ENCODE measurements at regions of chr15 and their contacts with region 1.

Region 1: GRCh38 chr15:63504247-63504978 is at the start of gene USP3:
- DNase-seq: peak; percentile 88 to 95 (median 94)
- ATAC-seq: peak; percentile 86
- H3K4me3 ChIP-seq: peak within 1 kb of the TSS; percentile 95
- H3K4me3 Mint-ChIP-seq: peak within 1 kb of the TSS; percentile 93 to 99 (median 98)
- H3K27ac ChIP-seq: peak within 1 kb of the TSS; percentile 97
- H3K27ac Mint-ChIP-seq: peak within 1 kb of the TSS; percentile 94 to 99 (median 97)
- H3K4me1 ChIP-seq: peaks cover 65 to 70% of the 10 kb centered on the region in 2 donors
- H3K4me1 Mint-ChIP-seq: peaks cover 30 to 75% (median 72%) of the 10 kb centered on the region in 7 donors
- H3K27me3 ChIP-seq: no peaks in the 10 kb centered on the region
- H3K27me3 Mint-ChIP-seq: no peaks in the 10 kb centered on the region
- total RNA-seq, gene USP3: 64.2 to 288 (median 155) TPM

Region 2: DNA sequence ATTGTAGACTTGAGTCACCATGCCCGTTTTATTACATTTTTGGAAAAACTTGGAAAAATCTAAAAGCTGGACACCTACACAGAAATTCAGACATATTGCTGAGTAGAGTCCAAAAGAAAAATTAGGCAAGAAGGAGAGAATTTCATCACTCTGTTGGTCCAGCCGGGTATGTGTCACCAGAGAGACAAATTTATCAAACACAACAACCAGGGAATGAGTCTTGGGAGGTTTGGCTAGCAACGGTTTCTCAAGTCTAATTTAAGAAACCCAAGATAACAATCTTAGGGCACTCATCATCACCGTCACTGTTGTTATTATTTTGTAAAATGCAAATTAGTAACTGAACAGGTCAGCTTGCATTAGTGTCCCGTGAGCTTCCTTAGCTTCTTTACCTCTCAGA is 1141.8 kb before region 1 on chr15:
- CTCF ChIA-PET with region 1: no interaction called
- POLR2A ChIA-PET with region 1: no interaction called
- intact Hi-C with region 1: no loop called
- DNase-seq: no peak
- ATAC-seq: no peak
- H3K4me3 ChIP-seq: no peak overlapping the region
- H3K4me3 Mint-ChIP-seq: no peak overlapping the region
- H3K27ac ChIP-seq: no peak overlapping the region
- H3K27ac Mint-ChIP-seq: no peak overlapping the region
- H3K4me1 ChIP-seq: no peaks in the 10 kb centered on the region
- H3K4me1 Mint-ChIP-seq: no peaks in the 10 kb centered on the region
- H3K27me3 ChIP-seq: peaks cover 0 to 3% of the 10 kb centered on the region in 2 donors
- H3K27me3 Mint-ChIP-seq: peaks cover 21 to 50% (median 28%) of the 10 kb centered on the region in 5 donors

Region 3: DNA sequence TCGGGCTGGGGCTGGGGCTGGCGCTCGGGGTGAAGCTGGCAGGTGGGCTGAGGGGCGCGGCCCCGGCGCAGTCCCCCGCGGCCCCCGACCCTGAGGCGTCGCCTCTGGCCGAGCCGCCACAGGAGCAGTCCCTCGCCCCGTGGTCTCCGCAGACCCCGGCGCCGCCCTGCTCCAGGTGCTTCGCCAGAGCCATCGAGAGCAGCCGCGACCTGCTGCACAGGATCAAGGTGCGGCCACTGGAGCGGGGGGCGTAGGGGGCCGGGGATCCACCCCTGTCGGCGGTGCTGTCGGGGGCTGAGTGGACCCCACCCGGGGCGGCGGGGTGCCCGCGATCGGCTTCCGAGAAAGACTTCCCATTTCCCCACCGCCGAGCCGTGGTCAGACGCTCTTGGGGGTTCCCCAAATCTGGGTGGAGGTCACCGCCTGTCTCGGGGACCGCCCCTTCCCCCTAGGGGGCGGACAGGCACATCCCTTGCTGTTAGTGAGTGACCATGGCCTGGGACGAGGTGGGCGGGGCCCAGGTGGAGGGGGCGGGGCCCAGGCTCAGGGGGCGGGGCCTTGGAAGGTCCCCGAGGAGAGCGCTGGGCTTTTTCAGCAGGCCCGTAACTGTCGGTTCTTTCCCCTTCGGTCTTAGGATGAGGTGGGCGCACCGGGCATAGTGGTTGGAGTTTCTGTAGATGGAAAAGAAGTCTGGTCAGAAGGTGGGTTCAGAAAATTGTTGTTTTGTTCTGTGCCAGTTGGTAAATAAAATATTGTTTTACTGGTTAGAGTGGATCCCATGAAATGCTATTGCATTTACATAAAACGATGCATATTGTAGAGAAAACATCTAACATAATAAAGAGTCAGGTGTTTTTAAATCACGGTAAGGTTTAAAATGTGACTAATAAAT is 382.2 kb before region 1 on chr15:
- CTCF ChIA-PET with region 1: no interaction called
- POLR2A ChIA-PET with region 1: no interaction called
- intact Hi-C with region 1: loop called in 1 of 2 experiments (anchors 5 kb)
- DNase-seq: peak; percentile 38 to 91 (median 57)
- ATAC-seq: peak; percentile 95
- H3K4me3 ChIP-seq: peak overlapping the region; percentile 75
- H3K4me3 Mint-ChIP-seq: peak overlapping the region; percentile 80 to 95 (median 92)
- H3K27ac ChIP-seq: peak overlapping the region; percentile 80
- H3K27ac Mint-ChIP-seq: peak overlapping the region; percentile 54 to 95 (median 79)
- H3K4me1 ChIP-seq: peaks cover 4 to 8% of the 10 kb centered on the region in 2 donors
- H3K4me1 Mint-ChIP-seq: peaks cover 9 to 29% (median 18%) of the 10 kb centered on the region in 7 donors
- H3K27me3 ChIP-seq: no peaks in the 10 kb centered on the region
- H3K27me3 Mint-ChIP-seq: no peaks in the 10 kb centered on the region

Region 4: DNA sequence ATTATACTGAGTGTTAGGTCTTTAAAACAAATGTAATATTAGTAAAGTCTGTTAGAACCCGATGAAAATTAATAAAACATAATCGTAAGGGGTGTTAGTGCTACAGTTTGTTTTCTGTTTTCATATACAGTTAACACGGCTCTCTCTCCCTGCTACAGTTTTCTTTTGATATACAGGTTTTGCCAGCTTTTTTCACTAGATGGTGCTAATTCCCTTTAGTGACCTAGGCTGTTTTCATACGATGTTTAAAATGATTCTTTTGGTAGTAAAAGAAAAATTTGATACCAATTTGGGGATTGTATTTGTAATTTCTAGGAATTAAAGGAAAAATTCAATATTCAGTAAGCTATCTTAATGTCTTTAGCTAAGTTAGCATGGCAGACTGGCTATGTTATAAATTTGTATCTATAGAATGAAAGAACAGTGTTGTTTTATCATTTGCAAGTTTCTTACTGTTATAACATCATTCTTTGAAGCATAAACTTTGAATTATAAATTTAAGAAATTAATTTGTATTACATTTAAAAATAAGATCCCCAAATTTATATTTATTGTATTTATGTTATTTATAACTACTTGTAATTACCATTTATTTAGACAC is 215.5 kb before region 1 on chr15:
- CTCF ChIA-PET with region 1: no interaction called
- POLR2A ChIA-PET with region 1: no interaction called
- intact Hi-C with region 1: no loop called
- DNase-seq: peak in 7 of 9 donors; percentile 30 to 68 (median 52)
- ATAC-seq: peak; percentile 79
- H3K4me3 ChIP-seq: no peak overlapping the region
- H3K4me3 Mint-ChIP-seq: peak overlapping the region in 1 of 10 donors; percentile 6
- H3K27ac ChIP-seq: no peak overlapping the region
- H3K27ac Mint-ChIP-seq: peak overlapping the region in 4 of 9 donors; percentile 12 to 64 (median 59)
- H3K4me1 ChIP-seq: no peaks in the 10 kb centered on the region
- H3K4me1 Mint-ChIP-seq: peaks cover 5 to 10% (median 7%) of the 10 kb centered on the region in 7 donors
- H3K27me3 ChIP-seq: no peaks in the 10 kb centered on the region
- H3K27me3 Mint-ChIP-seq: no peaks in the 10 kb centered on the region

Region 5: DNA sequence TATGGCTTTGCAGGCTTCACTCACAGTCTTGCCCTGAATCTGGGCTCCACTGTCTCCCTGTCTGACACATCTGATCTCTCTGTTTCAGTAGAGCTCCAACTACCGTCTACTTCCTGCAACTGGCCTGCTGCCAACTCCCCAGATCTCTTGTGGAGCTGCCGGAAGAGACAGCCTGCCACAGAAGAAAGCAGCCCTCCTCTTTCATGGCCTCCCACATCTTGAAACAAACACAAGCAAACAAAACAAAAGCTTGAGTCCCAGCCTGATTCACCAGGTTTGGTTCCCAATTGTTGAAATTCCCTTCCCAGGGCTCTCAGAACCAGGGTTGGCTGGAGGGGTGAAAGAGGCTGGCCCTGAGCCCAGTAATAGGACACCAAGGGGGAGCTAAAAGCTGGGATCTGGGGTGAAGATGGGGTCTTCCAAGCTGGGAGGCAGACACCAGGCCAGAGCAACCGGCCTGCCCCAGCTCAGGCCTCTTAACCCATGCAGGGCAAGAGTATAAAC is 67.5 kb before region 1 on chr15:
- CTCF ChIA-PET with region 1: no interaction called
- POLR2A ChIA-PET with region 1: interaction called, 10 read pairs
- intact Hi-C with region 1: no loop called
- DNase-seq: peak; percentile 58 to 91 (median 84)
- ATAC-seq: peak; percentile 89
- H3K4me3 ChIP-seq: peak overlapping the region; percentile 33
- H3K4me3 Mint-ChIP-seq: peak overlapping the region; percentile 9 to 86 (median 69)
- H3K27ac ChIP-seq: peak overlapping the region; percentile 62
- H3K27ac Mint-ChIP-seq: peak overlapping the region; percentile 83 to 97 (median 92)
- H3K4me1 ChIP-seq: peaks cover 4 to 38% of the 10 kb centered on the region in 2 donors
- H3K4me1 Mint-ChIP-seq: peaks cover 16 to 74% (median 52%) of the 10 kb centered on the region in 7 donors
- H3K27me3 ChIP-seq: no peaks in the 10 kb centered on the region
- H3K27me3 Mint-ChIP-seq: no peaks in the 10 kb centered on the region

Region 6: DNA sequence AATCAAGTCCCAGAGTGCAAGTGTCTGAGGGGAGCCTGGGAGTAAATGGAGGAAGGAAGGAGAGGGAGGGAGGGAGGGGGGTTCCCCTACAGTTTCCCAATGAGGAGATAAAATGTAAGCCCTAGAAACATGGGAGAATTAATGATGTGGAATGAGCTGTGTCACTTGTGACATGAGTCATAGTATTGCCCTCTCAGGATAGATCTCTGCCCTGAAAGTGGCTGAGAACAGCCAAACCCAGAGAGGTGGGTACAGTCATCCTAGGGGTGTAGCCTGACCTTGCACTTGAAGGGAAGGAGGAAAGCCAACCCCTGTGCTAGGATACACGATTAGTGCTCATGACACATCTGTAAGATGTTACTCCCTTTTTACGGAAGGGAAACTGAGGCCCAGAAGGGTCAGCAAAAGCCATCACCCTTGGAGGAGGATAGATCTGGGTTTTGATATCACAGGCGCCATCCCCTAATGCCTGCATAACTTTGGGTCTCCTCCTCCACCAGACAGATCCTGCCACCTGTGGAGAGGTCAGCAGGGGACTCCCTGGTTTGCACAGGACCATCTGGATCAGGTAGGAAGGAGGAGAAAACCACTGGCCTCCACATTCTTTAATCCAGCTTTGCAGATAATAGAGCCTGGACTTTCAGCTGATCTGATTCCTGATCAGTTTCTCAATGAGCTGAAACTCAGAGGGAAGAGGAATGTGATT is 23.2 kb before region 1 on chr15:
- CTCF ChIA-PET with region 1: interaction called, 70 read pairs
- POLR2A ChIA-PET with region 1: interaction called, 392 read pairs
- intact Hi-C with region 1: loop called (anchors 1 kb)
- DNase-seq: no peak
- ATAC-seq: peak; percentile 18
- H3K4me3 ChIP-seq: peak overlapping the region; percentile 18
- H3K4me3 Mint-ChIP-seq: peak overlapping the region in 7 of 10 donors; percentile 42 to 90 (median 78)
- H3K27ac ChIP-seq: peak overlapping the region; percentile 96
- H3K27ac Mint-ChIP-seq: peak overlapping the region; percentile 99 to 100 (median 99)
- H3K4me1 ChIP-seq: peaks cover 54 to 81% of the 10 kb centered on the region in 2 donors
- H3K4me1 Mint-ChIP-seq: peaks cover 46 to 91% (median 80%) of the 10 kb centered on the region in 7 donors
- H3K27me3 ChIP-seq: no peaks in the 10 kb centered on the region
- H3K27me3 Mint-ChIP-seq: no peaks in the 10 kb centered on the region

Region 7: GRCh38 chr15:63522225-63522578 is 17.8 kb after region 1 on chr15:
- CTCF ChIA-PET with region 1: interaction called, 9 read pairs
- POLR2A ChIA-PET with region 1: interaction called, 18 read pairs
- intact Hi-C with region 1: loop called in 1 of 2 experiments (anchors 1 kb)
- DNase-seq: no peak
- ATAC-seq: no peak
- H3K4me3 ChIP-seq: no peak overlapping the region
- H3K4me3 Mint-ChIP-seq: peak overlapping the region in 8 of 10 donors; percentile 7 to 70 (median 56)
- H3K27ac ChIP-seq: no peak overlapping the region
- H3K27ac Mint-ChIP-seq: peak overlapping the region in 1 of 9 donors; percentile 45
- H3K4me1 ChIP-seq: peaks cover 50 to 58% of the 10 kb centered on the region in 2 donors
- H3K4me1 Mint-ChIP-seq: peaks cover 54 to 100% (median 96%) of the 10 kb centered on the region in 7 donors
- H3K27me3 ChIP-seq: no peaks in the 10 kb centered on the region
- H3K27me3 Mint-ChIP-seq: no peaks in the 10 kb centered on the region

Region 8: GRCh38 chr15:63600616-63601025 is 96.2 kb after region 1 on chr15:
- CTCF ChIA-PET with region 1: interaction called, 14 read pairs
- POLR2A ChIA-PET with region 1: interaction called, 65 read pairs
- intact Hi-C with region 1: loop called (anchors 1 to 2 kb)
- DNase-seq: peak; percentile 85 to 95 (median 90)
- ATAC-seq: peak; percentile 93
- H3K4me3 ChIP-seq: peak overlapping the region; percentile 95
- H3K4me3 Mint-ChIP-seq: peak overlapping the region; percentile 91 to 99 (median 94)
- H3K27ac ChIP-seq: peak overlapping the region; percentile 80
- H3K27ac Mint-ChIP-seq: peak overlapping the region; percentile 90 to 96 (median 93)
- H3K4me1 ChIP-seq: peaks cover 22 to 27% of the 10 kb centered on the region in 2 donors
- H3K4me1 Mint-ChIP-seq: peaks cover 39 to 70% (median 66%) of the 10 kb centered on the region in 7 donors
- H3K27me3 ChIP-seq: no peaks in the 10 kb centered on the region
- H3K27me3 Mint-ChIP-seq: no peaks in the 10 kb centered on the region